ENCODE measurements at regions of chr11 and their contacts with region 1.

Region 1: DNA sequence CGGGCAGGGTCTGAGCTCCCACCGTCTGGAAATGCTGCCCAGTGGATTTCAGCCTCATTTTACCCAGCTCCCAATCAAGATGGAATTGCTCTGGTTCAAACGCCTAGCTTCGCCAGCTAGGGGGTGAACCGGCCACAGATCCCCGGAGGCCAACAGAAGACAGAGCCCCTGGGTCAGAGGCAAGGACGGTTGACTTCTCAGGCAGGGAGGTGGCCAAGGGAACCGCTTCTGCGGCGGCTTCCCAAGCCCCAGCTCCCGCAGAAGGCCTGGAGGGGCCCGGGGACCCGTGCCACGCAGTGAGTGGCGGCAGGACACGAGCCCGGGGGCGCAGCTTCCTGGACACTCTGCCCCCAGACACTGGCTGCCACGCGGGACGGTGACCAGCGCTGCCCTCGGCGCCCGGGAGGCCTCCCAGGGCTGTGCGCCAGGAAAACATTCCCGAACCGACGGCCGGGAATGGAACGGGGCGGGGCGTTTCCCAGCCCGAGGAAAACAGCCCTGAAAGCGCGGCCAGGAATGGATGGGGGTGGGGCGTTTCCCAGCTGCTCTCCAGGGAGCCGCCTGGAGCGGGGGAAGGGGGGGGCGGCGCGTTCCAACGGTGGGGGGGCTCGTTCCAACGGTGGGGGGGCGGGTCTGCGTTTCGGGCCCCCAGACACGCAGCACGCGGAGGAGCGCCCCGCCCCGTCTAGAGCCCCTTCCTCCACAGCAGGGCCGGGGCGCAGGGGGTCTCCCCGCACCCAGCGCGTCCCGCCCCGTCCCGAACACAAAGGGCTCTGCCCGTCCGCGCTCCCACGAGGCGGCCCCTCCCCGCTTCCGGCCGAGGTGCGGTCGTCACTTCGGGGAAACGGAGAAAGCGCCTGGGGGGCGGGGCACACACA is 13.5 kb upstream of the B4GALNT4 start:
- DNase-seq: peak; percentile 87 to 90 (median 90)
- ATAC-seq: peak; percentile 67
- H3K4me3 ChIP-seq: peak overlapping the region; percentile 35
- H3K27ac ChIP-seq: peak overlapping the region; percentile 98
- H3K4me1 ChIP-seq: peaks cover 40 to 64% of the 10 kb centered on the region in 2 experiments
- H3K27me3 ChIP-seq: no peaks in the 10 kb centered on the region; a peak in 1 of 5 replicates
- CTCF ChIP-seq: no peak
- EP300 ChIP-seq: no peak
- POLR2A ChIP-seq: peak; percentile 58; the same call in 1 of the 2 replicates
- RAD21 ChIP-seq: no peak

Region 2: DNA sequence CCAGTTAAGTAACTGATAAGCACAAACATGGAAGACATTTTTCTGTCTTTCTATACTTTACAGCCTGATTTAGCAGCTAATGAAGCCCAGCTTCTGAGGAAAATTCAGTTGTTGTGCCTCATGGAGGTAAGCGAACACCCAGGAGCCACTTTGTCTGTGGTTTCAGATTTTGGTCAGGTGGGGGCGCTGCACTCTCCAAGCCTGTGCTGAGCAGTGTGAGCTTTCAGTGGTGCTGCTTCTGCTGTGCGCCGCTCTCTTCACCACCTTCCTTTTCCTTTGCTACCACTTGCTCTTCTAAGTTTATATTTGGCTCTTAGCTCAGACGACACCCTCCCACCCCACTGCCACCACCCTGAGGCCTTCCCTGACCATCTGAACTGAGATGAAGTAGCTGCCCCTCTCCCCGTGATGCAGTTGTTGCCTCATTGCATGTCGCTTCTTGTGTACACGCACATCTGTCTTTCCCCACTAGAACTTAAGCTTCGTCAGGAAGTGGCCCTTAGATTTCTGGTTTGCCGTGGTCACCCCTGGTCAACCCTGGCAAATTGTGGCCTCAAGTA is 105.0 kb before region 1 on chr11:
- CTCF ChIA-PET with region 1: interaction called, 3 read pairs
- POLR2A ChIA-PET with region 1: interaction called, 3 read pairs
- in situ Hi-C with region 1: loop called (anchors 5 kb)
- intact Hi-C with region 1: no loop called
- DNase-seq: peak; percentile 48 to 76 (median 64)
- ATAC-seq: peak; percentile 97
- H3K4me3 ChIP-seq: no peak overlapping the region
- H3K27ac ChIP-seq: no peak overlapping the region
- H3K4me1 ChIP-seq: no peaks in the 10 kb centered on the region
- H3K27me3 ChIP-seq: no peaks in the 10 kb centered on the region
- CTCF ChIP-seq: peak; percentile 76 to 90 (median 83)
- EP300 ChIP-seq: no peak
- POLR2A ChIP-seq: no peak
- RAD21 ChIP-seq: peak; percentile 62 to 74

Region 3: GRCh38 chr11:269146-269890 is 86.5 kb before region 1 on chr11:
- CTCF ChIA-PET with region 1: no interaction called
- POLR2A ChIA-PET with region 1: no interaction called
- in situ Hi-C with region 1: no loop called
- intact Hi-C with region 1: loop called (anchors 5 kb)
- DNase-seq: peak in 2 of 4 experiments; percentile 38 to 67
- ATAC-seq: peak; percentile 52
- H3K4me3 ChIP-seq: peak overlapping the region; percentile 43
- H3K27ac ChIP-seq: peak overlapping the region; percentile 93
- H3K4me1 ChIP-seq: peaks cover 19 to 34% of the 10 kb centered on the region in 2 experiments; a peak in 4 of 5 replicates
- H3K27me3 ChIP-seq: no peaks in the 10 kb centered on the region
- CTCF ChIP-seq: 0 out of 6 replicates have a peak, but pooled peaks of 1 of the 3 experiments have one; percentile 4
- EP300 ChIP-seq: peak; percentile 82; the same call in 1 of the 2 replicates
- POLR2A ChIP-seq: peak; percentile 43; the same call in 1 of the 2 replicates
- RAD21 ChIP-seq: no peak

Region 4: DNA sequence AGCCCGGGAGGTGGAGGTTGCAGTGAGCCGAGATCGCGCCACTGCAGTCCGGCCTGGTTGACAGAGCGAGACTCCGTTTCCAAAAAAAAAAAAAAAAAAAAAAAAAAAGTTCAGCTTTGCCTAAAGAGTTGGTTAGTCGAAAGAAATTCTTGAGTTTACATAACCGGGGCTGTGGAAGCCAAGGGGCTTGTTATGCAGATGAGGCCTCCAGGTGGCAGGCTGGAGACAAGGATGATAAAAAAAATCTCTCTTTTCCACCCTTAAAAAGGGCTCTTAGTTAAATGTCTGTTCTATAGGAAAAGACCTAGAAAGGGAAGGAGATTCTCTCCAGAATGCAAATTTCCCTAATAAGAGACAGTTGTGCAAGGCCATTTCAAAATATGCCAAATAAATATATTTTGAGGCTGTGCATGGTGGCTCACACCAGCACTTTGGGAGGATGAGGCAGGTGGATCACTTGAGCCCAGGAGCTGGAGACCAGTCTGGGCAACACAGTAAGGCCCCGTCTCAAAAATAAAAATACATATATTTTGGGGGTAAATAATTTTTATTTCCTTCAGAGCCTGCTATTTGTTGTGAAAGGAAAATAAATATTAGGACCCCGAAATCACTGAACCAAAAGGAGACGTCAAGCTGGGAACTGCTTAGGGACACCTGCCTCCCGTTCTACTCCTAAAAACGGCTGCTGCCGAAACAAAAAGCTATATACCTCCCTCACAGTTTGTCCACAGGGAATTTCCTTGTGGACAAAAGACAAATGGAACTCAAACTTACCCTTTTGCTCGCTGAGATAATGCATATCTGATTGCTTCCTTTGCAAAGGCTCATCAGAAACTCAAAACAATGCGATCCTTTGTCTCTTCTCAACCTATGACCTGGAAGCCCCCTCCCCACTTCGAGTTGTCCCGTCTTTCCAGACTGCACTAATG is 50.6 kb before region 1 on chr11:
- CTCF ChIA-PET with region 1: interaction called, 3 read pairs
- POLR2A ChIA-PET with region 1: interaction called, 4 read pairs
- in situ Hi-C with region 1: loop called (anchors 5 kb)
- intact Hi-C with region 1: loop called (anchors 2 kb)
- DNase-seq: peak; percentile 56 to 79 (median 68)
- ATAC-seq: peak; percentile 63
- H3K4me3 ChIP-seq: no peak overlapping the region
- H3K27ac ChIP-seq: no peak overlapping the region
- H3K4me1 ChIP-seq: peaks cover 19 to 40% of the 10 kb centered on the region in 2 experiments
- H3K27me3 ChIP-seq: no peaks in the 10 kb centered on the region
- CTCF ChIP-seq: peak; percentile 66 to 78 (median 78)
- EP300 ChIP-seq: no peak
- POLR2A ChIP-seq: no peak
- RAD21 ChIP-seq: peak; percentile 76 to 80

Region 5: DNA sequence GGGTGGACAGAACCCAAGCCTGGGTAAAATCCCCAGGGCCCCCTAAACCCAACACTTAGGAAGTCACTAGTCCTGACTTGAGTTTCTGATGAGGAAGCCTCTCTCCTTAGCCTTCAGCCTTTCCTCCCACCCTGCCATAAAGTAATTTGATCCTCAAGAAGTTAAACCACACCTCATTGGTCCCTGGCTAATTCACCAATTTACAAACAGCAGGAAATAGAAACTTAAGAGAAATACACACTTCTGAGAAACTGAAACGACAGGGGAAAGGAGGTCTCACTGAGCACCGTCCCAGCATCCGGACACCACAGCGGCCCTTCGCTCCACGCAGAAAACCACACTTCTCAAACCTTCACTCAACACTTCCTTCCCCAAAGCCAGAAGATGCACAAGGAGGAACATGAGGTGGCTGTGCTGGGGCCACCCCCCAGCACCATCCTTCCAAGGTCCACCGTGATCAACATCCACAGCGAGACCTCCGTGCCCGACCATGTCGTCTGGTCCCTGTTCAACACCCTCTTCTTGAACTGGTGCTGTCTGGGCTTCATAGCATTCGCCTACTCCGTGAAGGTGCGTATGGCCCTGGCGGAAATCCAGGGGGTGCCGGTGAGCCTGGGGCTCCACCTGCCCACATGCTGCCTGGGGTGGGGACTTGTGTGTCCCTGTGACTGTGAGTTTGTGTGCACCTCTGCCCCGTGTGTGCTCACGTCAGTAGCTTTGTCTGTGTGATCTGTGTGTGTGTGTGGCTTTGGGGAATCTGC is 41.9 kb before region 1 on chr11 and contains the start of gene IFITM1:
- CTCF ChIA-PET with region 1: no interaction called
- POLR2A ChIA-PET with region 1: interaction called, 5 read pairs
- in situ Hi-C with region 1: loop called (anchors 5 kb)
- intact Hi-C with region 1: loop called (anchors 2 kb)
- DNase-seq: peak in 2 of 4 experiments; percentile 84 to 89
- ATAC-seq: peak; percentile 56
- H3K4me3 ChIP-seq: peak within 1 kb of the TSS; percentile 69
- H3K27ac ChIP-seq: peak within 1 kb of the TSS; percentile 87
- H3K4me1 ChIP-seq: peaks cover 33 to 43% of the 10 kb centered on the region in 2 experiments
- H3K27me3 ChIP-seq: no peaks in the 10 kb centered on the region
- CTCF ChIP-seq: no peak
- EP300 ChIP-seq: no peak
- POLR2A ChIP-seq: peak; percentile 97
- RAD21 ChIP-seq: 0 out of 4 replicates have a peak, but pooled peaks of 1 of the 2 experiments have one; percentile 26
- polyA plus RNA-seq, gene IFITM1: 4,252 to 5,579 TPM

Region 6: DNA sequence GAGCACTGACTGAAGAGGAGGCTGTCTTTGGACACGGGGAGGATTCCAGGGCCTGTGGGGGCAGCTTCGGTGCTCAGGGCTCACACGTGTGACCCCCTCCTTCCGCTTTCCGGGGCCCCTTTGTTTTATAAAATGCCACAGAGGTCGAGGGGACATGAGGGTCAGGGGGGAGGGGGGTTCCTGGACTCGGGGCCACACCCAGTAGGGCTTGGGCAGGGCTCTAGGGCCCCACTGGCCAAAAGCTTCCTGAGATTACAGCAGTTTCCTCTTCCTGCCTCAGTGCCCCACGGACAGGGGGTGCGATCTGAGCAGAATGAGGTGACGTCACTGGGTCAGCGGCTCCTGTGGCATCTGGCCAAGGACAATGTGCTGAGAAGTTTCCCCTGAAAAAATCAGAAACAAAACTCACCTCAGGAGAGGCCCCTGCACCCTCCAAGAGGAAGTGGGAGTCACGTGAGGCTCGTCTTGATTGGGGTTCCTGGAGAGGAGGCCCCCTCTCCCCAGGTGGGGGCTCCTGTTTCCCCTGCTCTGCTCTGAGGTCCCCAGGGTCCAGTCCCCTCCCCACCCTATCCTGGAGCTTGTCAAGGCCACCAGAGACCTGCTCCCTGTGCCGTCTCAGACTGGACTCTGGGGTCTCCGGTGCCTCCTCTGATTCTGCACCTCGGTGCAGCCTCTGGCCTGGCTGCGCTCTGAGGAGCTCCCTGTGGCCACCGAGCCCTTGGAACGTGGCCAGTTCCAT is 28.8 kb before region 1 on chr11:
- CTCF ChIA-PET with region 1: interaction called, 3 read pairs
- POLR2A ChIA-PET with region 1: interaction called, 20 read pairs
- in situ Hi-C with region 1: no loop called
- intact Hi-C with region 1: loop called (anchors 1 kb)
- DNase-seq: peak; percentile 42 to 86 (median 53)
- ATAC-seq: peak; percentile 53
- H3K4me3 ChIP-seq: peak overlapping the region; percentile 18; the same call in 1 of the 2 replicates
- H3K27ac ChIP-seq: peak overlapping the region; percentile 88
- H3K4me1 ChIP-seq: peaks cover 51 to 60% of the 10 kb centered on the region in 2 experiments
- H3K27me3 ChIP-seq: no peaks in the 10 kb centered on the region
- CTCF ChIP-seq: no peak
- EP300 ChIP-seq: peak; percentile 16; the same call in 1 of the 2 replicates
- POLR2A ChIP-seq: peak; percentile 53
- RAD21 ChIP-seq: no peak

Measured in K562 (cell line).